Prostate gland (tissue), 2 donors: ENCODE measurements at regions of chr16 and their contacts with region 1.

Region 1: GRCh38 chr16:3950343-3951193 is 70.1 kb upstream of the CREBBP start:
- DNase-seq: peak; percentile 48
- H3K4me3 ChIP-seq: no peak overlapping the region
- H3K27ac ChIP-seq: peak overlapping the region; percentile 38 to 59
- H3K4me1 ChIP-seq: no peaks in the 10 kb centered on the region
- H3K27me3 ChIP-seq: peaks cover 4% of the 10 kb centered on the region
- CTCF ChIP-seq: no peak
- POLR2A ChIP-seq: no peak

Region 2: GRCh38 chr16:3690470-3690928 is 260.1 kb before region 1 on chr16:
- intact Hi-C with region 1: loop called (anchors 10 kb)
- DNase-seq: peak; percentile 84
- H3K4me3 ChIP-seq: peak overlapping the region; percentile 5 to 19
- H3K27ac ChIP-seq: peak overlapping the region in 1 of 2 donors; percentile 36
- H3K4me1 ChIP-seq: peaks cover 4% of the 10 kb centered on the region
- H3K27me3 ChIP-seq: no peaks in the 10 kb centered on the region
- CTCF ChIP-seq: peak; percentile 81 to 95 (median 92)
- POLR2A ChIP-seq: no peak

Region 3: DNA sequence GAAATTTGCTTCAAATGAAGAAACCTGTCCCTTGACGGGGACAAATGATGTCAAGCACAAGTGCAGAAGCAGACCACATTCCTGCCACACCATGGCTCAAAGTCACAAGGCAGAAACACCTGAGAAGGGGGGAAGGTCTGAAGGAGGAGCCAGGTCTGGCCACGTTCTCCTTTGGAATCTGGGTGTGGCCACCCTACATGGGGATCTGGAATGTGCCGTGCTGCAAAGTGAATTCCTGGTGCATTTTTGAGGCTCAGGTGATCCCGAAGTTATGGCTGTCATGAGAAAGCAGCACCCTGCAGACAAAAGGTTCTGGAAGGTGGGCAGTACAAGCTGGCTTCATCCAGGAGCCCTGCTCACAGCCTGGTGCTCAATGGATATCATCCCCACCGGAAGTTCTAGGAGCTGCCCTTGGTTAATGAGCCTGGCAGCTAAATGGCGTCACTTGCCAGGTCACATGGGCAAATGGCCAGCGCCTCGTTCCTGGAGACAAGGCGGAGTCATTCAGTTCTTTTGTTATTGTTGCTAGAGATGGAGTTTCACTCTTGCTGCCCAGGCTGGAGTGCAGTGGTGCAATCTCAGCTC is 185.8 kb after region 1 on chr16:
- intact Hi-C with region 1: no loop called
- DNase-seq: peak; percentile 65
- H3K4me3 ChIP-seq: no peak overlapping the region
- H3K27ac ChIP-seq: peak overlapping the region in 1 of 2 donors; percentile 26
- H3K4me1 ChIP-seq: no peaks in the 10 kb centered on the region
- H3K27me3 ChIP-seq: no peaks in the 10 kb centered on the region
- CTCF ChIP-seq: peak in 1 of 4 experiments; percentile 47
- POLR2A ChIP-seq: no peak